Activated CD4-positive, alpha-beta T cell treated with anti-CD3 and anti-CD28 coated beads, Interleukin-2, amount 10 ng/mL, durations not matched to agents 24 days and 14 days (primary cell): ENCODE measurements at regions of chr7 and their contacts with region 1.

Region 1: GRCh38 chr7:44885394-44886317 is at the start of gene PURB:
- DNase-seq: peak; percentile 99
- H3K4me3 Mint-ChIP-seq: peak within 1 kb of the TSS; percentile 97
- H3K27ac Mint-ChIP-seq: peak within 1 kb of the TSS; percentile 99
- H3K4me1 Mint-ChIP-seq: peaks cover 42% of the 10 kb centered on the region
- H3K27me3 Mint-ChIP-seq: no peaks in the 10 kb centered on the region
- total RNA-seq, gene PURB: 41.4 and 41.5 TPM in 2 replicates

Region 2: DNA sequence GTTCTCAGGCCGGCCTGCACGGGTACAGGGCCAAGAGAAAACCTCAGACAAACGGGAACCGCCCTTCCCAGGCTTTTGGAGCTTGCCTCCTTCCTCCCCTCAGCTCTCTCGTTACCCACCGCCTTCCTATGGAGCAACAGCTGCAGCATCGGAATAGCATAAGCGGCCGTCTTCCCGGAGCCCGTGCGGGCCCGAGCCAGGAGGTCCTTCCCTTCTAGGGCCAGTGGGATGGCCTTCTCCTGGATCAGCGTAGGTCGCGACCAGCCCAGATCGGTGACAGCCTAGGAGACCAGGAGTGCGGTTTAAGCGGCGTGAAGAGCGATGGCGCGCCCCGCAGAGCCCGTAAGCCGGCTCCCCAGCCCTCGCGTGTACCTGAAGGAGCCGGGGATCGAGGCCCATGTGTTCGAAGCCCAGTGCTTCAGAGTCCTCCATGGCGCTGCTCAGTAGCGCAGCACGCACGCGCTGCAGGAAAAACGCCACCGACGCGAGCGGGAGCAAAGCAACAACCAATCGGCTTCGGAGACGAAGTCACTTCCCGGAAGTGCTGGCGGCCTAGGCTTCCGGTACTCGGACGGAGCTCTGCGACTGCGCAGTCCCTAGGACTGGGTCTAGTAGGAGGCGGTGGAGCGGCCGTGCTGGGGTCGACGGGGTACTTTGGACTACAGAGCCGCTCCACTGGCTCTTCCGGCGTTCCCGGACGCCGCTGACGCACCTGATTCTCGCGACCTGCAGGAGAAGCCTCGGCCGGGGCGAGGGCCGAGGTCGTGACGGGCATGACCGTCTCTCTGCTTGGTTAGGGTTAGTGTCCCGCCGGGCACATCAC is 312.0 kb before region 1 on chr7 and contains the start of gene DDX56:
- intact Hi-C with region 1: loop called (anchors 2 kb)
- DNase-seq: peak; percentile 98
- H3K4me3 Mint-ChIP-seq: peak within 1 kb of the TSS; percentile 92
- H3K27ac Mint-ChIP-seq: peak within 1 kb of the TSS; percentile 96
- H3K4me1 Mint-ChIP-seq: peaks cover 30% of the 10 kb centered on the region
- H3K27me3 Mint-ChIP-seq: no peaks in the 10 kb centered on the region
- total RNA-seq, gene DDX56: 162 and 172 TPM in 2 replicates

Region 3: GRCh38 chr7:44727158-44727933 is 158.3 kb before region 1 on chr7:
- intact Hi-C with region 1: no loop called
- DNase-seq: no peak
- H3K4me3 Mint-ChIP-seq: no peak overlapping the region
- H3K27ac Mint-ChIP-seq: peak overlapping the region; percentile 61
- H3K4me1 Mint-ChIP-seq: peaks cover 7% of the 10 kb centered on the region
- H3K27me3 Mint-ChIP-seq: no peaks in the 10 kb centered on the region

Region 4: GRCh38 chr7:44748045-44748947 is 137.4 kb before region 1 on chr7 and contains the start of gene ZMIZ2:
- intact Hi-C with region 1: loop called (anchors 1 kb)
- DNase-seq: peak; percentile 97
- H3K4me3 Mint-ChIP-seq: peak within 1 kb of the TSS; percentile 93
- H3K27ac Mint-ChIP-seq: peak within 1 kb of the TSS; percentile 89
- H3K4me1 Mint-ChIP-seq: peaks cover 33% of the 10 kb centered on the region
- H3K27me3 Mint-ChIP-seq: no peaks in the 10 kb centered on the region
- total RNA-seq, gene ZMIZ2: 130 and 133 TPM in 2 replicates

Region 5: DNA sequence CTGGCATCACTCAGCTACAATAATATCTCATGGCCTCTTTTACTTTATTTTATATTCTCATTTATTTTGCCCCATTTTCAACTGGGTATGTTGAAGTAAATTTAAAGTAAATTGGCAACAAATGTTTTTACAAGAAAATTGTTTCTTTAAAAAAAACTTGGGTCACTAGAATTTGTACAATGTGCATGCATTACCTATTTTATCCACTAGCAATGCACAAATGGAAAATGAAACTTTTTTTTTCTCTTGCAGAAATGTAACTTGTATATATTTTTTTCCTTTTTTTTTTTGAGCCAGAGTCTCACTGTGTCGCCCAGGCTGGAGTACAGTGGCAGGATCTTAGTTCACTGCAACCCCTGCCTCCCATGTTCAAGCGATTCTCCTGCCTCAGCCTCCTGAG is 27.5 kb before region 1 on chr7:
- intact Hi-C with region 1: loop called (anchors 1 kb)
- DNase-seq: no peak
- H3K4me3 Mint-ChIP-seq: no peak overlapping the region
- H3K27ac Mint-ChIP-seq: no peak overlapping the region
- H3K4me1 Mint-ChIP-seq: peaks cover 15% of the 10 kb centered on the region
- H3K27me3 Mint-ChIP-seq: peaks cover 3% of the 10 kb centered on the region

Region 6: GRCh38 chr7:44921607-44922359 is 36.1 kb after region 1 on chr7:
- intact Hi-C with region 1: loop called (anchors 1 kb)
- DNase-seq: peak; percentile 98
- H3K4me3 Mint-ChIP-seq: no peak overlapping the region
- H3K27ac Mint-ChIP-seq: peak overlapping the region; percentile 81
- H3K4me1 Mint-ChIP-seq: peaks cover 12% of the 10 kb centered on the region
- H3K27me3 Mint-ChIP-seq: peaks cover under 1% of the 10 kb centered on the region

Region 7: GRCh38 chr7:44999245-45000095 is 113.8 kb after region 1 on chr7:
- intact Hi-C with region 1: loop called (anchors 1 kb)
- DNase-seq: peak; percentile 100
- H3K4me3 Mint-ChIP-seq: peak overlapping the region; percentile 87
- H3K27ac Mint-ChIP-seq: peak overlapping the region; percentile 97
- H3K4me1 Mint-ChIP-seq: peaks cover 53% of the 10 kb centered on the region
- H3K27me3 Mint-ChIP-seq: peaks cover 3% of the 10 kb centered on the region